ENCODE measurements at regions of chr15 and their contacts with region 1.

Region 1: GRCh38 chr15:39976291-39977274 is 42.7 kb downstream of the EIF2AK4 start:
- DNase-seq: peak; percentile 57 to 91 (median 83)
- H3K4me3 ChIP-seq: peak overlapping the region in 3 of 4 donors; percentile 29 to 69 (median 32)
- H3K27ac ChIP-seq: peak overlapping the region in 4 of 5 donors; percentile 64 to 92 (median 86)
- H3K4me1 ChIP-seq: peaks cover 0 to 6% of the 10 kb centered on the region in 2 donors
- H3K27me3 ChIP-seq: no peaks in the 10 kb centered on the region
- CTCF ChIP-seq: peak; percentile 42 to 86 (median 58)
- POLR2A ChIP-seq: peak in 1 of 2 donors; percentile 48

Region 2: GRCh38 chr15:39799552-39800011 is 177.0 kb before region 1 on chr15:
- intact Hi-C with region 1: loop called in 1 of 2 experiments (anchors 10 kb)
- DNase-seq: peak in 1 of 7 donors; percentile 22
- H3K4me3 ChIP-seq: no peak overlapping the region
- H3K27ac ChIP-seq: no peak overlapping the region
- H3K4me1 ChIP-seq: no peaks in the 10 kb centered on the region
- H3K27me3 ChIP-seq: peaks cover 9% of the 10 kb centered on the region
- CTCF ChIP-seq: no peak
- POLR2A ChIP-seq: no peak

Region 3: GRCh38 chr15:39896846-39897245 is 79.7 kb before region 1 on chr15:
- intact Hi-C with region 1: loop called in 1 of 2 experiments (anchors 10 kb)
- DNase-seq: no peak
- H3K4me3 ChIP-seq: no peak overlapping the region
- H3K27ac ChIP-seq: no peak overlapping the region
- H3K4me1 ChIP-seq: no peaks in the 10 kb centered on the region
- H3K27me3 ChIP-seq: no peaks in the 10 kb centered on the region
- CTCF ChIP-seq: no peak
- POLR2A ChIP-seq: no peak

Region 4: GRCh38 chr15:40357723-40358470 is 381.3 kb after region 1 on chr15 and contains the start of gene DISP2:
- intact Hi-C with region 1: no loop called
- DNase-seq: peak; percentile 82 to 92 (median 87)
- H3K4me3 ChIP-seq: peak within 1 kb of the TSS in 2 of 4 donors; percentile 24 to 55
- H3K27ac ChIP-seq: peak within 1 kb of the TSS in 1 of 5 donors; percentile 57
- H3K4me1 ChIP-seq: peaks cover 5 to 16% of the 10 kb centered on the region in 2 donors
- H3K27me3 ChIP-seq: no peaks in the 10 kb centered on the region
- CTCF ChIP-seq: no peak
- POLR2A ChIP-seq: no peak
- total RNA-seq, gene DISP2: 0.36 to 3.6 (median 0.94) TPM in 8 of 9 donors, not detected in the other